Activated T-helper 2 cell treated with anti-CD3 and anti-CD28 coated beads, Interferon-gamma antibody, Interleukin-2, Interleukin-4, amounts not matched to agents 10 μg/mL and 5 μg/mL and 100 μg/mL, durations not matched to agents 14 hours and 24 hours and 36 hours (primary cell): ENCODE measurements at regions of chr20 and their contacts with region 1.

Region 1: DNA sequence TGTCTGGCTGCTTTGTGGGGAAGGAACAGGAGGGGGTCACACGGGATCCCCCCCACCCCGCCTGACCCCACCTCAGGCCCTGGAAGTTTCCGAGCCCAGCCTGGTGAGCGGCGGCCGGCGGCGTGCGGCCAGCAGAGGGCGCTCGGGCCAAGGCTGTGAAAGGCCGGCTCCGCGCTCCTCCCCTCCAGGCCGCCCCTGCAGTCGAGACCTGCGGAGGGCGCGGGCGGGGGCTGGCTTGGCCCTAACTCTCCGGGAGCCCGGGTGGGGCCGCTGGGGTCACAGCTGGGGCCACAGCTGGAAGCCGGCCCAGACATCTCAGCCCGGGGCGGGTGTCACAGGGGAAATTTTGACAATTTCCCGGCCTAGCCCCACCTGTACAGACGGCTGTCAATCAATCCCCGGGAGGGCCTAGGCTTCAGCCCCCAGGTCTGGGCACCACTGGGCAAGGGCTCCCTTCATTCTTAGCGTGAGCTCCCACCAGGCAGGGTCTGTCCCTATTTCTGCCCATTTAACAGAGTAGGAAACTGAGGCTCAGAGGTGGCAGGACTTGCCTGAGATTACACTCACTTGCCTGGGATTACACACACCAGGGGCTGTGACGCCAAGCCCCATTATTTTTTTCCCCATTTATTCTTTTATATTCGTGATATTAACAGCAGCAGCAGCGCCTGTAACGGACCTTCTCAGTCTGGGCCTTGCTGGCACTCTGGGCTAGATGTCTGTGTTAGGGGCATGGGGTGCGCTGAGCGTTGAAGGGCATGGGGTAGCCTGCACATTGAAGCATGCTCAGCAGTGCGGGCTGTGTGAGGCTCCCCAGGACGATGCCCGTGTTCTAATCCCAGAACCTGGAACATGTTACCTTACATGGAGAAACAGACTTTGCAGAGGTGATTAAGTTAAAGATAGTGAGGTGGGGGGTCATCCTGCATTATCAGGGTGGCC is 23.0 kb downstream of the ZBP1 start:
- DNase-seq: peak; percentile 59
- H3K4me3 Mint-ChIP-seq: no peak overlapping the region
- H3K27ac Mint-ChIP-seq: no peak overlapping the region
- H3K4me1 Mint-ChIP-seq: peaks cover 8% of the 10 kb centered on the region
- H3K27me3 Mint-ChIP-seq: peaks cover 22% of the 10 kb centered on the region

Region 2: GRCh38 chr20:57383447-57384347 is 213.6 kb before region 1 on chr20:
- intact Hi-C with region 1: loop called (anchors 5 kb)
- DNase-seq: no peak
- H3K4me3 Mint-ChIP-seq: no peak overlapping the region
- H3K27ac Mint-ChIP-seq: no peak overlapping the region
- H3K4me1 Mint-ChIP-seq: peaks cover 35% of the 10 kb centered on the region
- H3K27me3 Mint-ChIP-seq: no peaks in the 10 kb centered on the region

Region 3: GRCh38 chr20:57619051-57619834 is 22.0 kb after region 1 on chr20:
- intact Hi-C with region 1: loop called (anchors 2 kb)
- DNase-seq: peak; percentile 77
- H3K4me3 Mint-ChIP-seq: peak overlapping the region; percentile 65
- H3K27ac Mint-ChIP-seq: peak overlapping the region; percentile 91
- H3K4me1 Mint-ChIP-seq: peaks cover 47% of the 10 kb centered on the region
- H3K27me3 Mint-ChIP-seq: peaks cover 17% of the 10 kb centered on the region

Region 4: GRCh38 chr20:58179432-58180099 is 582.3 kb after region 1 on chr20:
- intact Hi-C with region 1: loop called (anchors 2 kb)
- DNase-seq: peak; percentile 60
- H3K4me3 Mint-ChIP-seq: peak overlapping the region; percentile 45
- H3K27ac Mint-ChIP-seq: no peak overlapping the region
- H3K4me1 Mint-ChIP-seq: no peaks in the 10 kb centered on the region
- H3K27me3 Mint-ChIP-seq: peaks cover 8% of the 10 kb centered on the region